ENCODE measurements at regions of chr4 and their contacts with region 1.

Region 1: GRCh38 chr4:11293866-11294265 is 134.8 kb downstream of the HS3ST1 start:
- DNase-seq: no peak
- ATAC-seq: no peak
- H3K4me3 ChIP-seq: no peak overlapping the region
- H3K27ac ChIP-seq: no peak overlapping the region
- H3K4me1 ChIP-seq: no peaks in the 10 kb centered on the region
- H3K27me3 ChIP-seq: no peaks in the 10 kb centered on the region

Region 2: DNA sequence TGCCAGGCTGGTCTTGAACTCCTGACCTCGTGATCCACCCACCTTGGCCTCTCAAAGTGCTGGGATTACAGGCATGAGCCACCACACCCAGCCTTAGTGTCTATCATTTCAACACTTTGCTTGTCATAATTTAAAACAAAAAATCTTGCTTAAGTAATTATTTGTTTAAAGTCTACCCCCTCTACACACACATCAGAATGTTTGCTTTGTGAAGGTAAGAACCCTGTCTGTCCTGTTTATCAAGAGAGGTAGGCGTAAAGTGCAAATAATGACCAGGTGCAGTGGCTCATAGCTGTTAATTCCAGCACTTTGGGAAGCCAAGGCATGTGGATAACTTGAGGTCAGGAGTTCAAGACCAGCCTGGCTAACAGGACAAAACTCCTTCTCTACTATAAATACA is 282.7 kb before region 1 on chr4:
- intact Hi-C with region 1: no loop called
- DNase-seq: no peak
- ATAC-seq: no peak
- H3K4me3 ChIP-seq: no peak overlapping the region
- H3K27ac ChIP-seq: no peak overlapping the region
- H3K4me1 ChIP-seq: no peaks in the 10 kb centered on the region
- H3K27me3 ChIP-seq: no peaks in the 10 kb centered on the region

Region 3: GRCh38 chr4:11367371-11367770 is 73.5 kb after region 1 on chr4:
- intact Hi-C with region 1: loop called in 1 of 4 experiments (anchors 2 kb)
- DNase-seq: peak; percentile 64 to 86 (median 79)
- ATAC-seq: peak; percentile 87 to 94
- H3K4me3 ChIP-seq: no peak overlapping the region
- H3K27ac ChIP-seq: no peak overlapping the region
- H3K4me1 ChIP-seq: peaks cover 3% of the 10 kb centered on the region
- H3K27me3 ChIP-seq: no peaks in the 10 kb centered on the region

Measured in right cardiac atrium (tissue), 5 donors.